ENCODE measurements at regions of chr4 and their contacts with region 1.

Region 1: DNA sequence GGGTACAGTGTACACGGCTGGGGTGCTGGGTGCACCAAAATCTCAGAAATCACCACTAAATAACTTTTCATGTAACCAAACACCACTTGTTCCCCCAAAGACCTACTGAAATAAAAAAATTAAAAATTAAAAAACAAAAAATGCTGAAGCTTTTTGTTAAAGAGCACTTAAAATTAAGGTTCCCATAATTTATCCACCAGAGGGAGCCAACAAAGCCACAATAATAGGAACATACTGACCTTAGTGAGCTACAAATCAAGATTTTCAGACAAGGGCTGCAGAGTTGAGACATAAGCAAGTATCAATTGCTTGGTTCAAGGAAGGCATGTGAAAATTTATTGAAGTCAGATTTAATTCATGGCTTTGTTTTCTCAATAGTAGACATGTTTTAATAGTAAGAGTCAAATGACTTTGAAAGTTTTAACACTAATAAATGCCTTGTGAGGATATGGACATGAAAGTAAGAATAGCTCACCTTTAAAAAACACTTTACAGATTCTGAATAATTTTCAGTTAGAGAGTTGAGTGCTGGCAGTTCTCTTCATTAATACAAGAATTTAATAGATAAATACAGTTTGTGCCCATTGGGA is 43.0 kb upstream of the SCOC start:
- DNase-seq: peak; percentile 26

Region 2: GRCh38 chr4:140071806-140072205 is 258.6 kb before region 1 on chr4:
- CTCF ChIA-PET with region 1: no interaction called
- POLR2A ChIA-PET with region 1: no interaction called
- DNase-seq: no peak

Region 3: GRCh38 chr4:140085062-140085622 is 245.3 kb before region 1 on chr4:
- CTCF ChIA-PET with region 1: no interaction called
- POLR2A ChIA-PET with region 1: no interaction called
- DNase-seq: no peak

Region 4: GRCh38 chr4:140349816-140350215 is 19.4 kb after region 1 on chr4:
- CTCF ChIA-PET with region 1: interaction called, 12 read pairs
- POLR2A ChIA-PET with region 1: no interaction called
- DNase-seq: no peak

Region 5: GRCh38 chr4:140609548-140610425 is 279.4 kb after region 1 on chr4:
- CTCF ChIA-PET with region 1: interaction called, 10 read pairs
- POLR2A ChIA-PET with region 1: no interaction called
- DNase-seq: peak; percentile 61